H1 (cell line): ENCODE measurements at regions of chrX and their contacts with region 1.

Region 1: GRCh38 chrX:134026565-134027311 is 41.3 kb upstream of the GPC3 start:
- DNase-seq: peak; percentile 9 to 48
- H3K4me3 ChIP-seq: peak overlapping the region; percentile 1 to 52 (median 19); a peak in 5 of 8 replicates
- H3K27ac ChIP-seq: no peak overlapping the region
- H3K4me1 ChIP-seq: no peaks in the 10 kb centered on the region; a peak in 1 of 7 replicates
- H3K27me3 ChIP-seq: no peaks in the 10 kb centered on the region
- CTCF ChIP-seq: peak in 2 of 3 experiments; percentile 60 to 63; a peak in 3 of 4 replicates
- EP300 ChIP-seq: no peak
- POLR2A ChIP-seq: no peak
- RAD21 ChIP-seq: peak; percentile 58 to 65

Region 2: DNA sequence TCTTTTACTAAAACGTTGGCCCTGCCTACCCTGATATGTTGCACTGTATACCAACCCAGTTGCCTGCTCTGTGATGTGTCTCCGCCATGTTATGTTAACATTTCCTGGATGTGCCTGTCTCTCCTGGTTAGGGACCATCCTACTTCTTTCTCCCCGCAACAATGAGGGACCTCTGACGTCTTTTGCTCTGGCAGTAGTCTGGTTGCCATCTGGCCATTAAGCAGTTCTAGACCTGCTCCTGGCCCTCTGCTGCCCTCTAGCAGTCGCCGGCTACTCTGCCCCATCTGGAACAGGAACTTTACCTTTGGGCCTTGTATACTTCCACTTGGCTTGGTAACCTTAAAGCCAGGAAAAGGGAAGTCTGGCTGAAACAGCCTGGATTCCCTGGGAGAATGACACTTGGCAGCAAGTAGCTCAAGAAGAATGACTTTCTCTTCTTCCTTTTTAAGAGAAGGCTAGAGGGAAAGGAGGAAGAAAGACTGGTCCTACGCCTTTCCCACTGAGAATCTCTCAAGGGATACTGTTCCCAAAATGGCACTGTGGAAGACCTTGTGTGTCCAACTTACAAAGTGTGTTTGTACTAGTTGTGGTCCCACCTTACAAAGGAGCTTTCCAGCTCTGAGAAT is 104.9 kb before region 1 on chrX:
- CTCF ChIA-PET with region 1: interaction called, 12 read pairs
- POLR2A ChIA-PET with region 1: no interaction called
- DNase-seq: peak; percentile 38 to 68
- H3K4me3 ChIP-seq: no peak overlapping the region
- H3K27ac ChIP-seq: no peak overlapping the region
- H3K4me1 ChIP-seq: peaks cover 0 to 4% (median 3%) of the 10 kb centered on the region in 4 experiments; a peak in 4 of 7 replicates
- H3K27me3 ChIP-seq: no peaks in the 10 kb centered on the region
- CTCF ChIP-seq: peak; percentile 69 to 86 (median 73)
- EP300 ChIP-seq: no peak
- POLR2A ChIP-seq: no peak
- RAD21 ChIP-seq: peak; percentile 74 to 87

Region 3: DNA sequence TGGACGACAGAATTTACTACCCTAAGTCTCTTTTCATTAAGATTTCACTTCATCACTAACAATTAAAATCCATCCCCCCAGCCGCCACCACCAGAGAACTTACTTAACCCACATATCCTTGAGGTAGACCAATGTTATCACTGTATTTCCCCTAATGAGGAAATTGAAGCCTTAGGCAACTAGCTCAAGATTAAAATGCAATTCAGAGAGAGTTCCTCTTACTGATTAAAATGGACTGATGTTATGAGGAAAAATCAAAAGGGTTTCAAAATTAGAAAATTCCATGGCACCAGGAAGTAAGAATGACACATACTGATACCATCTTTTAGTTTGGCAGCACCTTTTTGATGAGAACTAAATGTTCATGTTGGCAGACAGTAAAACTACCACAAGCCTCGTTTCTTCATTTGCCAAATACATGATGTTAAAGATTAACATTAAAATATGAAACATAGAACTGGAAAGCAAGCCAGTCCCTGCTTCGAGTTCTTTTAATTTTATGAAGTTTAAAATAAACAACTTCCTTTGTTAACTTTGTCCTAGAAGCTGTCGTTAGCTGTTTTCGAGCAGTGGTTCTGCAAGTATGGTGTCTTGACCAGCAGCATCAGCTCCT is 141.0 kb after region 1 on chrX:
- CTCF ChIA-PET with region 1: no interaction called
- POLR2A ChIA-PET with region 1: no interaction called
- DNase-seq: no peak
- H3K4me3 ChIP-seq: no peak overlapping the region
- H3K27ac ChIP-seq: no peak overlapping the region
- H3K4me1 ChIP-seq: no peaks in the 10 kb centered on the region; a peak in 1 of 7 replicates
- H3K27me3 ChIP-seq: no peaks in the 10 kb centered on the region
- CTCF ChIP-seq: no peak
- EP300 ChIP-seq: no peak
- POLR2A ChIP-seq: no peak; a peak in 1 of 3 replicates
- RAD21 ChIP-seq: no peak

Region 4: DNA sequence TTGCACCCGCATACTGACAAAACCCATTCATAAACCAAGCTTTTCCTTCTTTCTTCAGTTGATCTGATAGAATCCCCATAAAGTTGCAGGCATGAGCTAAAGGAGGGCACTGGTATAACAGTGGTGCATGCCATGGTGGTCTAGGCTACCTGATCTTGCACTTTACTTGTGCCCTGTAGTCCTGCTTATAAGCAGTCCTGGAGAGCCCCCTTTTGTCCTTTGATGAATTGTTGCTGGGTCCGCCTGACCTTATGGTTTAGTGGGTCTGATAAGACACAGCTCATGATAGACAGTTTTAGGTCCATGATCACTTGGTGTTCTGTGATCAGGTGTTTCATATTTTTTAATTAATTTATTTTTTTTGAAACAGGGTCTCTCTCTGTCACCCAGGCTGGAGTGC is 229.9 kb after region 1 on chrX:
- CTCF ChIA-PET with region 1: interaction called, 12 read pairs
- POLR2A ChIA-PET with region 1: no interaction called
- DNase-seq: no peak
- H3K4me3 ChIP-seq: no peak overlapping the region
- H3K27ac ChIP-seq: no peak overlapping the region
- H3K4me1 ChIP-seq: no peaks in the 10 kb centered on the region; a peak in 1 of 7 replicates
- H3K27me3 ChIP-seq: no peaks in the 10 kb centered on the region
- CTCF ChIP-seq: peak in 2 of 3 experiments; percentile 4 to 19; a peak in 2 of 4 replicates
- EP300 ChIP-seq: no peak
- POLR2A ChIP-seq: no peak
- RAD21 ChIP-seq: peak; percentile 35 to 58